Activated B cell treated with CpG ODN at 0.5 μM for 24 hours (primary cell): ENCODE measurements at regions of chr17 and their contacts with region 1.

Region 1: DNA sequence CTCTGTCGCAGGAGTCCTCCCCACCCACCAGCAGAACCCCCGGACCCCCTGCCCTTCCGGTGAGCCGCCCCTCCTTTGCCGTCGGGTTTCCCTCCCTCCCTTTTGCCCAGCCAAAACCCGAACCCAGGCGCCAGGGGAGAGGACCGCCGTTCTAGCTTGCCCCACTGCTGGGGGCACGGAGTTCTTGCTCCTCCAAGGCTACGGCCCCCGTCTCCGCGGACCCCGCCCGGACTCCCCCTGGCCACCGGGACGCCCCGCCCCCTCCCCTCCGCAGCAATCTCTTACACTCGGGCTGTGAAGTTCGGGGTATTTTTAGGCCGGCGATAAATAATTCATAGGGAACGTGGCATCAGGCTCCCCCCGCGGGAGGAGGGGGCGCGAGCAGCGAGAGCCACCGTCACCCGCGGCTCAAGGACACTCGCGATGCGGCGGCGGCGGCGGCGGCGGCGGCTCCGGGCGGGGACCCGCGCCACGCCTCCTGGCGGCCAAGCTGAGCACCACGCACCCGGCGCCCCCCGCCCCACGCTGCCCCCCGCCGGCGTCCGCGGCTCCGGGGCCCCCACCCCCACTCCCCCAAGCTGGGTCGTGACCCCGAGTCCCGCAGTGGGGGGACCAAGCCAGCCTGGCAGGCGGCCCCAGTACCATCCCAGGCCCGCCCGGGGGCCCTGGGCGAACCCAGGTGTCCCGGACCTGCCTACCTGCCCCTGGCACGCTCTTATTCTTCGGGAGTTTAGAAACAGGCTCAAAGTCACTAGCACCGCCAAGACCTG is at the start of gene GRIN2C:
- DNase-seq: peak; percentile 52
- ATAC-seq: no peak
- H3K4me3 Mint-ChIP-seq: peak within 1 kb of the TSS; percentile 59
- H3K27ac Mint-ChIP-seq: no peak within 1 kb of the TSS
- H3K4me1 Mint-ChIP-seq: peaks cover 28% of the 10 kb centered on the region
- H3K27me3 Mint-ChIP-seq: peaks cover 48% of the 10 kb centered on the region
- CTCF ChIP-seq: no peak
- total RNA-seq, gene GRIN2C: not detected in 2 replicates

Region 2: DNA sequence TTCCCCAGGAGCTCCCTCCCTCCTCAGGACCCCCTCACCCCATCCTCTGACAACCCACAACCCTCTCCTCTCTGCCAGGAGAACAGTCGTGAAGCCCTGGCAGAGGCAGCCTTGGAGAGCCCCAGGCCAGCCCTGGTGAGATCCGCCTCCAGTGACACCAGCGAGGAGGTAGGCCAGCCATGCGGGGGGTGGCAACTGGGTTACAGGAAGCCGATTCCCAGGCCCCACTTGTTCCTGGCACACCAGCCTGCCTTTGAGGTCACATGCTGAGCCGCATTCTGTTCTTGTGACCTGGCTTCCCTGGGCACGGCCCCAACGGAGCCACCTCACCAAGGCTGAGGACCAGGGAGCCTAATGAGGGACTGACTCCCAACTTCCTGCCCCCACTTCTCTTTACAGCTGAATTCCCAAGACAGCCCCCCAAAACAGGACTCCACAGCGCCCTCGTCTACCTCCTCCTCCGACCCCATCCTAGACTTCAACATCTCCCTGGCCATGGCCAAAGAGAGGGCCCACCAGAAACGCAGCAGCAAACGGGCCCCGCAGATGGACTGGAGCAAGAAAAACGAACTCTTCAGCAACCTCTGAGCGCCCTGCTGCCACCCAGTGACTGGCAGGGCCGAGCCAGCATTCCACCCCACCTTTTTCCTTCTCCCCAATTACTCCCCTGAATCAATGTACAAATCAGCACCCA is 91.4 kb before region 1 on chr17:
- CTCF ChIA-PET with region 1: no interaction called
- POLR2A ChIA-PET with region 1: no interaction called
- intact Hi-C with region 1: no loop called
- DNase-seq: no peak
- ATAC-seq: no peak
- H3K4me3 Mint-ChIP-seq: no peak overlapping the region
- H3K27ac Mint-ChIP-seq: peak overlapping the region; percentile 14
- H3K4me1 Mint-ChIP-seq: peaks cover 7% of the 10 kb centered on the region
- H3K27me3 Mint-ChIP-seq: no peaks in the 10 kb centered on the region
- CTCF ChIP-seq: no peak

Region 3: GRCh38 chr17:74842599-74843351 is 16.9 kb before region 1 on chr17:
- CTCF ChIA-PET with region 1: interaction called, 4 read pairs
- POLR2A ChIA-PET with region 1: no interaction called
- intact Hi-C with region 1: loop called (anchors 2 kb)
- DNase-seq: no peak
- ATAC-seq: peak; percentile 64
- H3K4me3 Mint-ChIP-seq: no peak overlapping the region
- H3K27ac Mint-ChIP-seq: no peak overlapping the region
- H3K4me1 Mint-ChIP-seq: peaks cover 23% of the 10 kb centered on the region
- H3K27me3 Mint-ChIP-seq: peaks cover 21% of the 10 kb centered on the region
- CTCF ChIP-seq: no peak

Region 4: GRCh38 chr17:74879308-74879707 is 19.7 kb after region 1 on chr17:
- CTCF ChIA-PET with region 1: no interaction called
- POLR2A ChIA-PET with region 1: no interaction called
- intact Hi-C with region 1: no loop called
- DNase-seq: no peak
- ATAC-seq: no peak
- H3K4me3 Mint-ChIP-seq: no peak overlapping the region
- H3K27ac Mint-ChIP-seq: no peak overlapping the region
- H3K4me1 Mint-ChIP-seq: no peaks in the 10 kb centered on the region
- H3K27me3 Mint-ChIP-seq: peaks cover 10% of the 10 kb centered on the region
- CTCF ChIP-seq: no peak

Region 5: DNA sequence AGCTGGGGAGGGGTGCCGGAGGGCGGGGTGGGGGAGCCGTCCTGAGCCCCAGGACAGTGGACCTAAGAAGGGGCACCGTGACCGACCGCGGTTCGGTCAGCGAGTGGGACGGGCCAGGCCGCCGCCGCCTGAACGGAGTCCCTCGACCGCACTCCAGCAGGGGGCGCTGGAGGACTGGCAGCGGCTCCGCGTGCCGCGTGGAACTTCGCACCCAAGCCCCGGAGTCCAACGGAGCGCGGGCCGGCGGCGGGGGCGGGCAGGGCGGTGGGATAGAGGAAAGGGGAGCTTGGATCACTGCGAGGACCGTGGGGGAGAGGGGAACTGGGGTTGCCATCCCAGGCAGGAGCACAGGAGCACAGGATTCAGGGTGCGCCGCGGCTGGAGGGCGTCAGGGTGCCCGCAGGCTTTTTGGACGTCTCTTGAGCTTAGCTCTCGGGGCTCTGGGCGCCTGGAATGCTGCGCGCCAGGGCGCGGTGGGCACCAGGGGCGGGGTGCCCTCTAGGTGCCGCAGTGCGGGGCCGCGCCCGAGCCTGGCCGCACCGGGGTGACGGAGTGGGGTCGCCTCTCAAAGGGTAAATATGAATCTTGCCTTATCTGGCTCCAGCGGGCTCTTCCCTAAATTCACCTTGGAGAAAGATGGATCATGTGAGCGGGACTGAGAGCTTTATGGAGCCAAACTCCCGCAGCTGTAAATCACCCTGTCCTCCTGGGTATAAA is 64.0 kb after region 1 on chr17:
- CTCF ChIA-PET with region 1: no interaction called
- POLR2A ChIA-PET with region 1: no interaction called
- intact Hi-C with region 1: no loop called
- DNase-seq: peak; percentile 68
- ATAC-seq: peak; percentile 67
- H3K4me3 Mint-ChIP-seq: peak overlapping the region; percentile 63
- H3K27ac Mint-ChIP-seq: no peak overlapping the region
- H3K4me1 Mint-ChIP-seq: peaks cover 21% of the 10 kb centered on the region
- H3K27me3 Mint-ChIP-seq: peaks cover 57% of the 10 kb centered on the region
- CTCF ChIP-seq: no peak